ENCODE measurements at regions of chr5 and their contacts with region 1.

Region 1: GRCh38 chr5:116084871-116085715 is at the start of gene COMMD10:
- DNase-seq: peak; percentile 65 to 88 (median 83)
- ATAC-seq: peak; percentile 95
- H3K4me3 ChIP-seq: peak within 1 kb of the TSS; percentile 54
- H3K4me3 Mint-ChIP-seq: peak within 1 kb of the TSS; percentile 87 to 98 (median 95)
- H3K27ac ChIP-seq: peak within 1 kb of the TSS; percentile 94
- H3K27ac Mint-ChIP-seq: peak within 1 kb of the TSS; percentile 90 to 99 (median 98)
- H3K4me1 ChIP-seq: peaks cover 13 to 16% of the 10 kb centered on the region in 2 donors
- H3K4me1 Mint-ChIP-seq: peaks cover 22 to 77% (median 66%) of the 10 kb centered on the region in 7 donors
- H3K27me3 ChIP-seq: no peaks in the 10 kb centered on the region
- H3K27me3 Mint-ChIP-seq: peaks cover 0 to 3% (median 0%) of the 10 kb centered on the region in 5 donors
- total RNA-seq, gene COMMD10: 29.4 to 50.6 (median 37.8) TPM

Region 2: GRCh38 chr5:115262321-115263077 is 822.6 kb before region 1 on chr5 and contains the start of gene PGGT1B:
- CTCF ChIA-PET with region 1: no interaction called
- POLR2A ChIA-PET with region 1: no interaction called
- intact Hi-C with region 1: loop called in 1 of 2 experiments (anchors 2 kb)
- DNase-seq: peak; percentile 45 to 69 (median 64)
- ATAC-seq: peak; percentile 94
- H3K4me3 ChIP-seq: peak within 1 kb of the TSS; percentile 94
- H3K4me3 Mint-ChIP-seq: peak within 1 kb of the TSS; percentile 91 to 100 (median 96)
- H3K27ac ChIP-seq: peak within 1 kb of the TSS; percentile 76
- H3K27ac Mint-ChIP-seq: peak within 1 kb of the TSS; percentile 83 to 96 (median 94)
- H3K4me1 ChIP-seq: peaks cover 15 to 23% of the 10 kb centered on the region in 2 donors
- H3K4me1 Mint-ChIP-seq: peaks cover 33 to 59% (median 43%) of the 10 kb centered on the region in 7 donors
- H3K27me3 ChIP-seq: no peaks in the 10 kb centered on the region
- H3K27me3 Mint-ChIP-seq: peaks cover 0 to 4% (median 0%) of the 10 kb centered on the region in 5 donors
- total RNA-seq, gene PGGT1B: 34.5 to 49.1 (median 41.5) TPM

Measured in naive thymus-derived CD4-positive, alpha-beta T cell (primary cell).